Activated naive CD4-positive, alpha-beta T cell treated with anti-CD3 and anti-CD28 coated beads for 36 hours (primary cell): ENCODE measurements at regions of chr10 and their contacts with region 1.

Region 1: GRCh38 chr10:95841661-95842498 is 65.9 kb upstream of the CC2D2B start:
- DNase-seq: peak; percentile 67
- H3K4me3 Mint-ChIP-seq: no peak overlapping the region
- H3K27ac Mint-ChIP-seq: no peak overlapping the region
- H3K4me1 Mint-ChIP-seq: no peaks in the 10 kb centered on the region
- H3K27me3 Mint-ChIP-seq: peaks cover 6% of the 10 kb centered on the region

Region 2: DNA sequence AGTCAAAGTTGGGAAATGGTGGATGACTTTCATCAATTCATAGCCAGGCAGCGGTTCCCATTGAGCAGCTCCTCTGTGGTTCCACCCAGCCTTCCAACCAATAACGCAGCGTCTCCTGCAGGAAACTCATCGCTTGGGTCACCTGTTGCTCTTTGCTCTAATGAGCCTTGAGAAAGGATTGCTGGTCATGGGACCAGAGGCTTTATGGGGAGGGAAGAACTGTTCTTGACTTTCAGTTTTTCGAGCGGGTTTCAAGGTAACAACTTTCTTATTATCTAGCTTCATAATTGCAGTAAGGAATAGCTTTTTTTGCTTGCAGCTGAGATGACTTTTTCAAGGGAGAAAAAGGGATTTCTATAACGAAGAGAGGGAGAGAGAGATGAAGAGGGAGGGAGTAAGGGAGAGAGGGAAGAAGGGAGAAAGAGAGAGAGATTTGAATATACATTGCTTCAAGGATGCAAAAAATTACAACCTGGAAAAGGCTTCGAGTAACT is 86.3 kb before region 1 on chr10:
- CTCF ChIA-PET with region 1: interaction called, 13 read pairs
- intact Hi-C with region 1: loop called (anchors 5 kb)
- DNase-seq: no peak
- H3K4me3 Mint-ChIP-seq: peak overlapping the region; percentile 30
- H3K27ac Mint-ChIP-seq: no peak overlapping the region
- H3K4me1 Mint-ChIP-seq: peaks cover 5% of the 10 kb centered on the region
- H3K27me3 Mint-ChIP-seq: peaks cover 28% of the 10 kb centered on the region

Region 3: GRCh38 chr10:95831515-95831914 is 10.4 kb before region 1 on chr10:
- CTCF ChIA-PET with region 1: interaction called, 23 read pairs
- intact Hi-C with region 1: no loop called
- DNase-seq: no peak
- H3K4me3 Mint-ChIP-seq: no peak overlapping the region
- H3K27ac Mint-ChIP-seq: no peak overlapping the region
- H3K4me1 Mint-ChIP-seq: no peaks in the 10 kb centered on the region
- H3K27me3 Mint-ChIP-seq: no peaks in the 10 kb centered on the region

Region 4: DNA sequence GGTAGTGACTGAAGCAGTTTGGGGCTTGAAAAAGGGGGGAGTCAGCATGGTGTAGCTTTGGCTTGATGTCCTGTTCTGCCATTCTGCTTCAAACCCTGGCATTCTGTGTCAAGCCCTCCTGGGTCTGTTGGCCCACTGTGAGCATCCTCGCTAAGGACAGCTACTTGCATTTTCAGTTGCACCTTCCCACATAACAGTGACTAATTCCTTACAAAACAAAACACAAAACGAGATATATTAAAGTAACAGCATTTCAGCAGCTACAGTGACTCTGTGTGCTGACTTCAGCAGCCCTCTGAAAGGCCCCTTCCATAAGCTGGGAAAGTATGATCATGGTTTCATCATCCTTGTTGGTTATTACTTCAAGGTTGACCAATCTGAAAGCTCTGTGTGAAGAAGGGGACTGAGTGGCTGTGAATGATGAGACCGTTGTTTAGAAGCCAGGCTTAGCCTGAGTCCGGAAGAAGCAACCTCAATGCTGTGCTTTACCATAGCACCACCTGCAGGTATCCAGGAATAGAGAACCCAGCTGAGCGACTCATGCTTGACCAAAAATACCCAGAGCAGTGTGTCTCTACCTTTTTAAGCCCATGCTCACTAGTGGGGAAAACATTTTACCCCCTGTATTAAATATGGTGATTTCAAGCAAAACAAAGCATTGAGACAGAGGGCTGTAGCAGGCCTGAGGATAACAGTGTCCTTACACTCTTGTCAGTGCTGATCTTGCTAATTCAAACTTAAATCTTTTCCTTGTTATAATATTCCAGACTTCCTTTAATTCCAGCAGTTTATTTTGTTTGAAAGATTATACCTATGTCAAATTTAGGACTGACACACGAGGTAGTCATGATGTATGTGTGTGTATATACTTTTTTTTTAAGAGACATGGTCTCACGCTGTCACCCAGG is 23.3 kb after region 1 on chr10:
- CTCF ChIA-PET with region 1: interaction called, 5 read pairs
- intact Hi-C with region 1: loop called (anchors 2 kb)
- DNase-seq: peak; percentile 64
- H3K4me3 Mint-ChIP-seq: no peak overlapping the region
- H3K27ac Mint-ChIP-seq: no peak overlapping the region
- H3K4me1 Mint-ChIP-seq: peaks cover 12% of the 10 kb centered on the region
- H3K27me3 Mint-ChIP-seq: no peaks in the 10 kb centered on the region